Activated naive CD8-positive, alpha-beta T cell treated with anti-CD3 and anti-CD28 coated beads, Interleukin-2, amount 10 ng/mL, durations not matched to agents 7 days and 5 days (primary cell): ENCODE measurements at regions of chr9 and their contacts with region 1.

Region 1: DNA sequence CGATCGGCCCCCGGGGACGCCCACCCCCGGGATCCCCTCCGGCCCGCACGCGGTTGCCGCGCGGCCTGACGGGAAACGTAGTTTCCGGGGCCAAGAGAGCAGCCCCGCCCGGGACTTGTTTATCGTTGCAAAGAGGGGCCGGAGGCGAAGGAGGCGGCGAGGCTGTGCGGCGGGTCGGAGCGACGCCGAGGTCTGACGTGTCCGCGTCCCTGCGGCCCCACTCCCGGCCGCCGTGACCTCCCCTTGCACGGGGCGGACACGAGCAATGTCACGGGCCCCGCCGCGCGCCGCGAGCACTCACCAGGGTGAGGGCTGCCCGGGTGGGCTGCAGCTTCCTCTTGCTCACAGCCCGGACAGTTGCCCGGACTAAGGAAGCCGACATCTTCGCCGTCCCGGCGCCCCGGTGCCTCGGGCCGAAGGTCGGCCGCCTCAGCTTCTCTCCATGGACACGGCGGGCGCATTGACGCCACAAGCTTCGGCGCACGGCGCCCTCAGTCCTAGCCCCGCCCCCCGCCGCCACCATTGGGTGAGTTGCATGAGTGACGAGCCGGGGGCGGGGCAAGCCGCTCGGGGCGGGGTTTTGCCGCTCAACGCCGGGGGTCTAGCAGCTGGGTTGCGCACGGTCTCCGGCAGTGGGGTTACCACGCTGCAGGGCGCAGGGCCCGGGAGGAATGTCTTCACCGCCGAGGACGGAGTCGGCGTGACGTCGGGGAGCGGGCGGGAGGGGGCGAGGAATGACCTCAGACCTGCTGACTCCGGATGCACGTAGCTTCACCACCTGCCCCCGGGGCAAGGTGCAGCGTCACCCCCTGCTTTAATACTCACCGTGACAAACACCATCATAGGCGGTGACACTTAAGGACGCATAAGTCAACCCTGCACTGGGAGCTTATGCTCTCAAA is at the start of gene ISCA1:
- DNase-seq: peak; percentile 98
- ATAC-seq: peak; percentile 82
- H3K4me3 Mint-ChIP-seq: peak within 1 kb of the TSS; percentile 94
- H3K27ac Mint-ChIP-seq: peak within 1 kb of the TSS; percentile 95
- H3K4me1 Mint-ChIP-seq: peaks cover 31% of the 10 kb centered on the region
- H3K27me3 Mint-ChIP-seq: no peaks in the 10 kb centered on the region
- total RNA-seq, gene ISCA1: 21.2 to 24.5 TPM

Region 2: GRCh38 chr9:86246752-86247161 is 35.6 kb before region 1 on chr9:
- POLR2A ChIA-PET with region 1: no interaction called
- DNase-seq: no peak
- ATAC-seq: no peak
- H3K4me3 Mint-ChIP-seq: no peak overlapping the region
- H3K27ac Mint-ChIP-seq: no peak overlapping the region
- H3K4me1 Mint-ChIP-seq: peaks cover 2% of the 10 kb centered on the region
- H3K27me3 Mint-ChIP-seq: no peaks in the 10 kb centered on the region

Region 3: DNA sequence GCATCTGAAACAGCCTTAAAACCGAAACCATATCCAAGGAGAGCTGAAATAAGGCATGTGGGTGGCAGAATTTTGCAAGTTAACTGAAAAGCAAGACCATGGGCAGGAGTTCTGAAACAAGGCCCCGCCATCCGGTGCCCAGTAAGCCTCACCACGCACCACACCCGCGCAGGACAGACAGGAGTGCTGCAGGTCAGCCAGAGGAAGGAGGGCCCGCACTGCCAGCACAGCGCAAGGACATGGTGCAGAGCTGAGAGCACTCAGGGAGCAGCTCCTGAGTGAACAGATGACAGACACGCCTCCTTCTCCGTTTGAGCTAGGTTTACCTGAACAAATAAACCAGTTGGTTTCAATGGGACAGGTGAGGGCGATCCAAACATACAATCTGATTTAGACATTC is 16.5 kb after region 1 on chr9:
- POLR2A ChIA-PET with region 1: interaction called, 10 read pairs
- DNase-seq: no peak
- ATAC-seq: no peak
- H3K4me3 Mint-ChIP-seq: no peak overlapping the region
- H3K27ac Mint-ChIP-seq: no peak overlapping the region
- H3K4me1 Mint-ChIP-seq: peaks cover 12% of the 10 kb centered on the region
- H3K27me3 Mint-ChIP-seq: no peaks in the 10 kb centered on the region